ENCODE measurements at regions of chr11 and their contacts with region 1.

Region 1: GRCh38 chr11:15988693-15989231 is 367.6 kb downstream of the SOX6 start:
- DNase-seq: no peak
- CTCF ChIP-seq: no peak

Region 2: GRCh38 chr11:15507592-15507991 is 481.2 kb before region 1 on chr11:
- CTCF ChIA-PET with region 1: no interaction called
- POLR2A ChIA-PET with region 1: no interaction called
- DNase-seq: no peak
- CTCF ChIP-seq: no peak

Region 3: DNA sequence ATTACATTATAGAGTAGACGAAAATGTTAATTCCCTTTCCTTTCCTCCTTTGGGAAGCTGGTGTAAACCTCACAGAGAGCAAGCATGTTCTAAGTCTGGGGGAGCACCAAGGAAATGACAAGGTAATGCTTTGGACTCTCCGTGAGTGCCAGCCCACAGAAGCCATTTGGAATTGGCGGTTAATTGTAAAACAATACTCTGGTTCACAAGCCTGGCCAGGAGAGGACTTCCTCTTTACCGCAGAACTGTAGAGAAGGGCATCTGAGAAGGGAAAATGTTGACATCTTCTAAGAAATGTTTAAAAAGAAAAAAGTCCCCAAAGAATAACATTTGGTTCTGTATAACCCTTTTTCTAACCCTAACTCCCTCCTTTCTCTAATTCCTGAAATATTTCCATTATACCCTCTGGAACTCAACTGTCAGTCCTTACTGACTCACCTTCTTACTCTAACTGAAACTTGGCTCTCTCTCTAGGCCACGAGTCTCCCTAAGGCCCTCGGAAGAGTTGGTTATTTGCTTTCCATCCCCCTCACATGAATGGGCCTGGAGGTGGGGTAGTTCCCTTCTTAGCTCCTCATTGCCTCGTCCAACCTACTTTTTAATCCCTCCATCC is 12.2 kb before region 1 on chr11:
- CTCF ChIA-PET with region 1: interaction called, 10 read pairs
- POLR2A ChIA-PET with region 1: no interaction called
- DNase-seq: no peak
- CTCF ChIP-seq: no peak

Region 4: GRCh38 chr11:16013649-16014275 is 25.0 kb after region 1 on chr11:
- CTCF ChIA-PET with region 1: no interaction called
- POLR2A ChIA-PET with region 1: no interaction called
- DNase-seq: no peak
- CTCF ChIP-seq: no peak

Region 5: GRCh38 chr11:16043617-16044016 is 54.9 kb after region 1 on chr11:
- CTCF ChIA-PET with region 1: no interaction called
- POLR2A ChIA-PET with region 1: no interaction called
- DNase-seq: no peak
- CTCF ChIP-seq: no peak

Measured in GM10248 (cell line).